ENCODE measurements at regions of chr5 and their contacts with region 1.

Region 1: DNA sequence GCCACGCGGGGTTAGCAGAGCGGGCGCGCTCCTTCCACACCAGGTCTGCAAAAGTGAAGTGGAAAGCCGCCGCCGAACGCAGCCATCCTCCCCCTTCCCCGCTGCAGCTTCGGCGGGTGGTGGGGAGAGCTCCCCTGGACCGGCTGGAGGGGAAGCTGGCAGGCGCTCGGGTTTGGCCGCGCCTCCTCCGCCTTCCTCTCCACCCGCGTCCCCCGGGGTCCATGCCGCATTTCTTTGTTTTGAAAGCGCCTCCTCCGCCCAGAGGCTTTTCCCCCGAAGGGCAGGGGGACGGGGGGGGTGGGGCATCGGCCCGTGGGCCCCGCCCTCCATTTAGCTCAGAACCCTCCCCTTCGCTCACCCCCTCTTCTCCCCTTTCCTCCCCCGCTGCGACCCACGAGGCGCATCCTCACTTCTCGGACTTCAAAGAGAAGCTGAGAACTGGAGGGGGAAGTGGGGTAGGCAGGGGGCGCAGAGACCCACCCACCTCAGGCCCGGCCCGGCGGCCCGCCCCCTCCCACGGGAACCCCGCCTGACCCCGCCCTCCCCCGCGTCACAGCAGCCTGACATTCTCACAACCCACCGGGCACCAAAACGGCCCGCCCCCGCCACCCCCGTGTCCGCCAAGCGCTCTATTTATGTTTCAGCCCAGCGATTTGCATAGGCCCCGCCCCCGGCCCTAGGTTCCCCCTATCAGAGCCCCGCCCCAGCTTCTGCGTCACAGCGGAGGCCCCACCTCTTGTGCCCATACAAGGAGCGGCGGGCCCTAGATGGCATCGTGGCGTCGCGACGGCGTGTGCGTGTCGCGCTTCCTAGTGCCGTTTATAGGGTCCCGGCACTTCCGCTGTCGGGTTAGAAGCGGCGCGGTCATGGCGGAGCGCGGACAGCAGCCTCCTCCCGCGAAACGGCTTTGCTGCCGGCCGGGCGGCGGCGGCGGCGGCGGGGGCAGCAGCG is at the start of gene ZSWIM6:
- H3K4me3 ChIP-seq: peak within 1 kb of the TSS; percentile 99
- H3K27ac ChIP-seq: peak within 1 kb of the TSS; percentile 98
- H3K4me1 ChIP-seq: peaks cover 12% of the 10 kb centered on the region
- CTCF ChIP-seq: no peak

Region 2: GRCh38 chr5:61162010-61162831 is 169.5 kb before region 1 on chr5 and contains the start of gene SMIM15:
- CTCF ChIA-PET with region 1: interaction called, 4 read pairs
- POLR2A ChIA-PET with region 1: interaction called, 37 read pairs
- H3K4me3 ChIP-seq: peak within 1 kb of the TSS; percentile 99
- H3K27ac ChIP-seq: peak within 1 kb of the TSS; percentile 94
- H3K4me1 ChIP-seq: peaks cover 2% of the 10 kb centered on the region; the same call in 1 of the 2 replicates
- CTCF ChIP-seq: peak; percentile 63

Region 3: GRCh38 chr5:61280205-61280604 is 51.5 kb before region 1 on chr5:
- CTCF ChIA-PET with region 1: interaction called, 3 read pairs
- POLR2A ChIA-PET with region 1: interaction called, 26 read pairs
- H3K4me3 ChIP-seq: no peak overlapping the region
- H3K27ac ChIP-seq: no peak overlapping the region
- H3K4me1 ChIP-seq: peaks cover 4% of the 10 kb centered on the region; the same call in 1 of the 2 replicates
- CTCF ChIP-seq: no peak

Region 4: GRCh38 chr5:61301341-61302199 is 30.1 kb before region 1 on chr5:
- CTCF ChIA-PET with region 1: interaction called, 3 read pairs
- POLR2A ChIA-PET with region 1: interaction called, 10 read pairs
- H3K4me3 ChIP-seq: no peak overlapping the region
- H3K27ac ChIP-seq: no peak overlapping the region
- H3K4me1 ChIP-seq: peaks cover 6% of the 10 kb centered on the region
- CTCF ChIP-seq: no peak

Region 5: DNA sequence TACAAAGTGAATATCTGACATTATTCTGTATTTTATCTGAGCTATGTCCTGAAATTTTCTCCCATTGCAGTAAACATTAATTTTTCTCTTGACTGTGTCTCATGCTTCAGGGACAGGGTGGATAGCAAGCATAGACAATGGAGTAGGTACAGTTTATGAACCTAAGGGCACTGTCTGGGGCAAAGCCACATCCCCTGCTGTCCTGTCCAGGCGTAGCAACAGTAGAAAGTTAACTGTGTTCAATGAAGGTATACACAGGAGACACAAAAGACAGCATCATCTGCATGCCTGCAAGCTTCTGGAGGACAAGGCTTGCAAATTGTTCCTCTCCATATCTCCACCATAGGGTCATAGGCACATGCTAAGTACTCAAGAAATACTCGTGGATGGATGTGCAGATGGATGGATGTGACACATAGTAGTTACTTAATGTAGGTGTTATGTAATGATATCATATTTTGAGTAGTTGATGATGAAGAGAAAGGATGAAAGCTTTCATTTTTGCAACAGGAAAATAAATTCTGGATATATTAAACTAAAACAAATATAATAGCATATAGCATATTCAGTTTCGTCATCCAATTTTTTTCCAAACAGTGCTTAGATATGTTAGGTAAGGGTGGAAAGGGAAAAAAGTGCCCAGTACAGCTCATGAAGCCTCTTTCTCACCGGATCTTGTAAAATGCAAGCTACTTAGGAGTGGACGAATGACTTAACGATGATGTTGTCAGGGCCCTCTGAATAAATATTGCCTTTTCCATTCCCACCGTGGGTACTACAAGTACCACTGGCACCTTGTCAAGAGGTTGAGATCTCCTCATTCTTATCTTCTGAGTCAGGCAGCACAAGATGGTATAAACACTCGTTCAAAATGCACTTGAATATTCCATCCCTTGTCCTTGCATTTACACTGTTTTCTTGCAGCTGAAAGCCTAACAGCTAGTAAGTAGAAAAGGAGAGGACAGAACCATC is 19.6 kb before region 1 on chr5:
- CTCF ChIA-PET with region 1: interaction called, 5 read pairs
- POLR2A ChIA-PET with region 1: interaction called, 13 read pairs
- H3K4me3 ChIP-seq: no peak overlapping the region
- H3K27ac ChIP-seq: no peak overlapping the region
- H3K4me1 ChIP-seq: peaks cover 2% of the 10 kb centered on the region; the same call in 1 of the 2 replicates
- CTCF ChIP-seq: no peak

Region 6: GRCh38 chr5:61319388-61320146 is 12.1 kb before region 1 on chr5:
- CTCF ChIA-PET with region 1: interaction called, 5 read pairs
- POLR2A ChIA-PET with region 1: interaction called, 12 read pairs
- H3K4me3 ChIP-seq: no peak overlapping the region
- H3K27ac ChIP-seq: no peak overlapping the region
- H3K4me1 ChIP-seq: peaks cover 5% of the 10 kb centered on the region; the same call in 1 of the 2 replicates
- CTCF ChIP-seq: no peak

Region 7: DNA sequence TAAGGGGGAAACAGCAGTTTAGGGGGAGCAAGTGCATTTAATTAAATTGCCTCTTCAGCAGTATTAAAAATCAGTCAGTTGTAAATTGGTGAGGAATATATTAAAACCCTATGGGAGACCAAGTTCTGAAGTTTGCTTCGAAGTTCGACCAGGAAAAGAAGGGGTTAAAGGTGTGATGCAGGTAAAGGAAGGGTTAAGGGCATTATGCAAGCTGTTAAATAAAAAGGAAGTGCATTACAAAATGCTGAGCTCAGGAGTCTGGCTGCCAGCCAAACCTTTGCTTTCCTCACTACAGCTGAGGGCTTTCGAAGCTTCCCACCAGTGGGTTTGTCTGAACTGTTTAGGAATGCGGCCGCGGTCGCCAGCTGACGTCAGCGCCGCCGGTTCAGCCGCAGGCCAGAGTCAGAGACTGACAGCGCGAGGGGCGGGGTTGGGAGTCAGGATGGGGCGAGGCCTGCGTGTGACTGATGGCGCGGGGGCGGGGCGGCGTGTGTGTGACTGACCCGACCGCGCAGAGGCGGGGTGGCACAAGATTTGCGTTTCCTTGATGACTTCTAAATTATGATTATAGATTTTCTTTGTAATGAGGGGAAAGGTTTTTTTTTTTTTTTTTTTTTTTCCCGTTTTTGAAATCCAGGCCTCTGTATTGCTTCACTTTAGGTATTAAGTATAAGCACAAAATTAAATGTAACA is 76.9 kb after region 1 on chr5:
- CTCF ChIA-PET with region 1: no interaction called
- POLR2A ChIA-PET with region 1: interaction called, 29 read pairs
- H3K4me3 ChIP-seq: no peak overlapping the region; the same call in 1 of the 2 replicates
- H3K27ac ChIP-seq: no peak overlapping the region
- H3K4me1 ChIP-seq: peaks cover 15% of the 10 kb centered on the region; the same call in 1 of the 2 replicates
- CTCF ChIP-seq: no peak